ENCODE measurements at regions of chr2 and their contacts with region 1.

Region 1: DNA sequence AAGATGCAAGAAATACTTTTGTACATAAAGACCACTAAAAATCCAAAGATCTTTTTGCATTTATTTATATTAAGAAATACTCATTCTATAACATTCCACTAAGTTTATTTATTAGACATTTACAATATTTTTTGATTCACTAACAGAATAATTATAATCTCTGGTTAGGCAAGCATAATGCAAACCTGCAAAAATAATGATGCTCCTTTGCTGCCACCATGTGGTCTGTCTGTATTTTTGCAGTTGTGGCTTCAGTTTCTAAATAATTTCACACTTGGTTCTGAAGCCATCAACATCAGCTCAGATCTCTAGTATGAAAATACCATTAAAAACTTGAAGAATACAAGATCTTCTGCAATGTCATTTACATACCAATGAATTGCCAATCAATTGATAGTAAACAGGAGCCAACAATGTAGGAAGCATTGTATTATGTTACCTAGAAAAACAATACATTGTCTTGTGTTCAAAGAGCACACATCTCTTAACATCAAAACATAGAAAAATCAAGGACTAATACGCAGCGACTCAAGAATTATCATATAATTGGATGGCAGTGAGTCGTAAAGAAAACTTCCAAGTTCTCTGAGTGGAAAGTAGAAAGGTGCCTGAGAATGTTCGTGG is 28.8 kb upstream of the WDR75 start:
- DNase-seq: peak; percentile 72
- H3K4me3 ChIP-seq: no peak overlapping the region
- H3K27ac ChIP-seq: no peak overlapping the region
- H3K4me1 ChIP-seq: peaks cover 28% of the 10 kb centered on the region
- H3K27me3 ChIP-seq: no peaks in the 10 kb centered on the region
- CTCF ChIP-seq: peak; percentile 23 to 37
- POLR2A ChIP-seq: no peak

Region 2: DNA sequence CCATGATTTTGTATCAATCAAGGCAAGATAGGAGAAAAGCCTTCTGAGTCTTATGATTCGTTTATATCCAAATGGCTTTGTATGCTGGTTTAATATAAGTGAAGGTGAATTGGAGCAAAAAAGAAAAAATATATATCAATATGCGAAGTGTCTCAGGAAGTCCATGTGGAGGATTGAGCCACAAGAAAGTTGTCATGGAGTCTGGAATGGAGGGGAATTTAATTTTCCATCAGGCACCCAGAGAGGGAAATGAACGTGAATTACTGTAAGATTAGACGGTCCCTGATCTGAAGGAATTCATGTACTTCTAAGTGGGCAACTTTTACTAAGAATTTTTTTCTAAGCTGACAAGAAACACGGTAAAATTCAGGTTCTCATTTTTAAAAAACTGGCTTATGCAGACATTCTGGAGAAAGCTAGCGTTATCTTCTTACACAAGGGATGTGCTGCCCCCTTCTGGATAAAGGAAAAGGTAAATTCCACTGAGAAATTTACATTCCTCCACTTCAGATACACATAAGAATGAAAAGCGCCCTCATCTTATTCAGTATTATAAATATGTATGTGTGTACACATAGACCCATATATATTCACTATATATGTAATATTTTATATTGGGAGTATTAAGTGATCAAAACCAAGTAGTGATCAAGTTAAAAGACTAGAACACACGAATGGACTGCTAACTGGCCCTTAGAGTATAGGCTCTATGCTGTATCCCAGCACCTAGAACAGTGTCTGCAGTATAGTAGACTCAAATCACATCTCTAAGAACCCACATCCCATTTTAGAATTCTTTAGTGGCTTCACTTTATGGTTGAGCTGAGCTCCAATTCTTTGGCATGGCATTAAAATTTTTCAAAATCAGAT is 1569.2 kb before region 1 on chr2:
- CTCF ChIA-PET with region 1: interaction called, 3 read pairs
- POLR2A ChIA-PET with region 1: no interaction called
- dilution Hi-C with region 1: no loop called
- intact Hi-C with region 1: loop called (anchors 1 kb)
- DNase-seq: peak; percentile 75
- H3K4me3 ChIP-seq: no peak overlapping the region
- H3K27ac ChIP-seq: no peak overlapping the region
- H3K4me1 ChIP-seq: no peaks in the 10 kb centered on the region
- H3K27me3 ChIP-seq: no peaks in the 10 kb centered on the region
- CTCF ChIP-seq: peak; percentile 39 to 43
- POLR2A ChIP-seq: no peak

Region 3: DNA sequence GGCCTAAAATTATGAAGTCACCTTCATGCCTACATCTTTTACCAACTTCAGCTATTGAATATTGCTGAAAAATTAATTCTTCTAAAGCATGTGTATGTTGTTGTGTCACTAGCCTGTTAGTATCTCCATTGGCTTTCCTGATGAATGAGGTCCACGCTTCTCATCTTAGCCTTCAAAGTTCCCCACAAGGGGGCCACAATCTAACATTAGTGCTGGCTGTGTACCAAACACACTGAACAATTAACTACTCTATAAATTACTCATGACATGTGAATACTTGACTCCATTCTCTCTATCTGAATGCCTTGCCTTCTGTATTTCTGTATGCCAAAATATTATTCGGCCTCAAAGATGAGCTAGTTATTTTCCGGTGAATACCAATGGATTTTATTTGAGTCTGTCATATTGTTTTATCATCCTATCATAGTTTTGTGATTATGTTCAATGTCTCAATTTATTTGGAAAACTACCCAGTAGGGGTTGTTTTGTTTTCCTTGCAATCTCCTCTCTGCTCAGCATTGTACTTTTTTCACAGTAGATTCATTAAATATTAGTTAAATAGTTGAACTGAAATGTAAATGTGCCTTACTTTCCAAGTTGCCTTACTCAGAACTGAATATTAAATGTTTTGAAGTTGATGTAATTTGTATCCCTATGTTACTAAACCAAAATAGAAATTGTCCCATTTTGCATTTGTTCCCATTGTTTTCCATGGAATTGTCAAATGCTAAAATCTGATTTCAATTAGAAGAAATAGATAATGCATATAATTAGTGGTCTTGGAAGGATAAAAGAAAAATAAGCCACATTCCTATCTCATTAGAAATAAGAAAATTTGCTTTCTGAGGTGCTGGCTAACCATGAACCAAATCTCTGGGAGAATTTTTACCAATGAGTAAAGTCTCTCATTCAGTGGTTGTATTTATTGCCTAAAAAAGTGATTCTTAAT is 646.6 kb before region 1 on chr2:
- CTCF ChIA-PET with region 1: interaction called, 4 read pairs
- POLR2A ChIA-PET with region 1: no interaction called
- dilution Hi-C with region 1: no loop called
- intact Hi-C with region 1: loop called (anchors 2 kb)
- DNase-seq: peak; percentile 86
- H3K4me3 ChIP-seq: no peak overlapping the region
- H3K27ac ChIP-seq: no peak overlapping the region
- H3K4me1 ChIP-seq: no peaks in the 10 kb centered on the region
- H3K27me3 ChIP-seq: no peaks in the 10 kb centered on the region
- CTCF ChIP-seq: peak; percentile 50 to 58
- POLR2A ChIP-seq: no peak

Region 4: DNA sequence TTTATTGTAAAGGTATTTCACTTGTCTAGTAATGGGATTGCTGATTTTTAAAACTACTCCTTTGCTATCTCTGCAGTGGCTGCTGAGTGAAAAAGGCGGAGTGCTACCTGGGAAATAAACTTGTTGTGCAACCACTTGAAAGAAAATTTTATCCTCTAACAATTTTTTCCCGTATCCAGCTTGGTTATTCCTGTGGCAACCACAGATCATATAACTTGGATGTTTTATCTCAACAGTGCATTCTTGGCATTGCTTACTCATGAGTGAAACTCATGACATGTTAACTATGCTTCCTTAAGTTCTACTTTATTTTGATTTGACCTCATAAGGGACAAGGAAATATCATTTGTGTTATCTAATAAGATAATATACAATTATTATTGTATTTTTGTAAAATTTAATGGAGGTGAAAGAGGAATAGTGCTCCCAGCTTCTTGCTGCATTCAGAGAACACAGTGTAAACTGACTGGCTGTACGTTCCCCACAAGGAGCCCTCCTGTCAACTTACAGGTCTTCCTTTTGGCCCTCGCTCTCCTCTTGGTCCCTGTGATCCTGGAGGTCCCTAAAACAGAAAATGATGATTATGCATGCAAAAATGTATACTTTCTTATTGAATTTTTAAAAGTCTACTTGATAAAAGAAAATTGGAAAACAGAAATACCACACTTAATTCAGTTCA is 315.5 kb before region 1 on chr2:
- CTCF ChIA-PET with region 1: interaction called, 32 read pairs
- POLR2A ChIA-PET with region 1: no interaction called
- dilution Hi-C with region 1: no loop called
- intact Hi-C with region 1: loop called (anchors 1 kb)
- DNase-seq: peak; percentile 61
- H3K4me3 ChIP-seq: no peak overlapping the region
- H3K27ac ChIP-seq: peak overlapping the region; percentile 50
- H3K4me1 ChIP-seq: peaks cover 15% of the 10 kb centered on the region
- H3K27me3 ChIP-seq: no peaks in the 10 kb centered on the region
- CTCF ChIP-seq: no peak
- POLR2A ChIP-seq: no peak

Region 5: GRCh38 chr2:189179570-189179950 is 232.9 kb before region 1 on chr2 and contains the start of gene COL5A2:
- CTCF ChIA-PET with region 1: interaction called, 9 read pairs
- POLR2A ChIA-PET with region 1: no interaction called
- dilution Hi-C with region 1: no loop called
- intact Hi-C with region 1: loop called (anchors 1 kb)
- DNase-seq: peak; percentile 90
- H3K4me3 ChIP-seq: peak within 1 kb of the TSS; percentile 54 to 98 (median 76)
- H3K27ac ChIP-seq: peak within 1 kb of the TSS; percentile 65
- H3K4me1 ChIP-seq: peaks cover 15% of the 10 kb centered on the region
- H3K27me3 ChIP-seq: no peaks in the 10 kb centered on the region
- CTCF ChIP-seq: no peak
- POLR2A ChIP-seq: peak; percentile 88
- total RNA-seq, gene COL5A2: 123 and 138 TPM in 2 replicates

Region 6: DNA sequence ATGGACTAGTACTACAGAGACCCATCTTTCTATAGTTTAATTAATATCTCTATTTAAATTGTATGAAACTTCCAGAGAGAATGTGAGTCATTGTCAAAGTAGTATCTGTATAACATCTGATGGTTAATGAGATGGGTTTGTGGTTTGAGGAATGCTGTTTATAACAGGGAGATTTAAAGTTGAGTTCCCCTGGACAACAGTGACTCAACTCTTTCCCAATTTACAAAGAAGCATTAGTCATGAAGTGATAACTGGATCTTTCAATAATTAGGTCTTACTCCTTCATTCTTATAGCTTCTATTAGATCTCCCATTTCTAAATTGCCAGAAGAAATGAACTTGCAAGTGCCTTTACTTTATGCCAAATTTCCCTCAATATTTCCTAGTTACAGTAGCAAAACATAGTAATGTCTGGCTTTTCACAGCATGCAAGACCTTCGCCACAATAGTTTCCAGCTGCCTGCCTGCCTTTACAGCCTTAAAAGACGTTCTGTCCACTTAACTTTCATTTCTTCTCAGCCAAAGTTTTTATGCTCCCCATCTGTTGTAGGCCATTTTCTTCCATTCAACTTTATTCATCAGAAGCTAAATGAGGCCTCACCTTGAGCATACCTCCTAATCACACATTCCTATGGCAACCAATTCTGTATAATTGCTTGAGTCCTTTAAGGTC is 18.9 kb before region 1 on chr2:
- CTCF ChIA-PET with region 1: interaction called, 13 read pairs
- POLR2A ChIA-PET with region 1: no interaction called
- dilution Hi-C with region 1: no loop called
- intact Hi-C with region 1: no loop called
- DNase-seq: peak; percentile 51
- H3K4me3 ChIP-seq: no peak overlapping the region
- H3K27ac ChIP-seq: no peak overlapping the region
- H3K4me1 ChIP-seq: no peaks in the 10 kb centered on the region
- H3K27me3 ChIP-seq: no peaks in the 10 kb centered on the region
- CTCF ChIP-seq: no peak
- POLR2A ChIP-seq: no peak

Measured in endothelial cell of umbilical vein (primary cell).